PC-9 (cell line): ENCODE measurements at regions of chr3 and their contacts with region 1.

Region 1: DNA sequence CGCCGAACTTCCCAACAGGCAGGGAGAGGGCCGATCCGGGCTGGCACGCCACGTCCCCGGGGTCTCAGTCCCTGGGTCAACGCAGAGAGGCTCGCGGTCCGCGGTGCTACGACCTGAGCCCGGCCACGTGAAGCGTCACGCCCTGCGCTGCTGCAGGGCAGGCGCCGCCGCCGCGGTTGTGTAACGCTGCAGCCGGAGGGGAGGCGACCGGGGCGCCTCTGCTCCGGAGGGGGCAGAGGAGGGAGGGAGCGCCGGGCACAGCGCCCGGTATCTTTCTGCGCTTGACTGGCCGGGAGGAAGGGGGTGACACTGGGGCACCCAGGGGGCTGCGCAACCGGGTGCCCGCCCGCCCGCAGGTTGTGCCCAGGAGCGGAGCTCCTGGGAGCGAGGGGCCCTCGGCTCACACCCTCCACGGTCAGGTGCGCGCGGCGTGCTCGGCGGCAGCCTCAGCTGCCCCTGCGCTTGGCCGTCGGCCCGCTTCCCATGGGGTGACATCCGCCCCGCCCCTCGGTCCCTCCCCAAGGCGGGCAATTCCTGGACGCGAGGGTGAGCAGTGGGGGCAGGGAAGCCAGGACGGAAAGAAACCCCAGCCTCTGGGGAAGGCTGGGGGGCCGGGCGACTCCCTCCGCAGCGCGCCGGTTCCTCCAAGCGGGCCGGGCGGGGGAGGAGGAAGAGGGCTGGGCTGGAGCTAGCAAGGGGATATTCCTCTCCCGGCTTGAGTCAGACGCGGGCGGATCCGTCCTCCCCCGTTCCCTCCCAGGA is 852 bp upstream of the BHLHE40 start:
- DNase-seq: peak; percentile 85 to 99
- H3K4me3 ChIP-seq: peak overlapping the region; percentile 69
- H3K27ac ChIP-seq: peak overlapping the region; percentile 100
- H3K4me1 ChIP-seq: peaks cover 26% of the 10 kb centered on the region
- H3K27me3 ChIP-seq: no peaks in the 10 kb centered on the region
- CTCF ChIP-seq: no peak

Region 2: DNA sequence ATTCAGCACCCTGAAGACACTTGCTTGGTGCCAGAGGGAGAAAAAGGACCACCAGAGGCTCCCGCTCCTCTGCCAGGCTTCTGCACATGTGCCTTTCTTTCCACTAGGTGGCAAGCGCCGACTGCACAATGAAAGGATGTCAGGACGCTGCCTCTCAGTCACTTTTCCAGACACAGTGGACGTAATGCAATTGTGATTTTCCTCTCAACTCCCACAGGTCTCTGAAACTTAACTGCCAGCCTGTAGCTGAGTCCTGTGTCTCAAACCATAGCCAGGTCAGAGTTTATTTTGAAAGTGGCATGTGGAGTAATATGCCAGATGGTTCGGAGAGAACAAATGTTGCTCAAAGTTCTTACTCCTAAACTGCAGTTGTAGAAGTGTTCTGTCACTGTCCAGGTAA is 322.3 kb before region 1 on chr3:
- CTCF ChIA-PET with region 1: no interaction called
- POLR2A ChIA-PET with region 1: no interaction called
- intact Hi-C with region 1: loop called (anchors 2 kb)
- DNase-seq: peak; percentile 36 to 69
- H3K4me3 ChIP-seq: no peak overlapping the region
- H3K27ac ChIP-seq: no peak overlapping the region
- H3K4me1 ChIP-seq: no peaks in the 10 kb centered on the region
- H3K27me3 ChIP-seq: no peaks in the 10 kb centered on the region
- CTCF ChIP-seq: peak; percentile 79

Region 3: DNA sequence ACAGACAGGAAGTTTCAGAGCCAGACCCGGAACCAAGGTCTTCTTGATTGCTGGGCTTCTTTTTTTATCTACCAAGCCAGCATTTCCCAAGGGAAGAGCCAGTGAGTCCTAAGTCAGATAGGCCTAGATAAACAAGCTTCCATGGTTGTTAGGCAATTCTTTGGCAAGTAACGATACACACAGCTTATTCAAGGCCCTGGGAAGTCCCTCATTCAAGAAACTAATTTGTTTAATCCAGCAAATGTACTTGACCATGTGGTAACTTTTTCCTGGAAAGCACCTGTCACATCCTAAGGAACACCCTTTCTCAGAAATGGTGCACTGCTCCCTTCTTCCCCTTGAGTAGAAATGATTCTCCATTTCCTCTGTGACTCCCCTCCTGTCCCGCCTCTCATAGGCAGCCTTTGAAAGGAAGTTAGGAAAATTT is 275.3 kb before region 1 on chr3:
- CTCF ChIA-PET with region 1: no interaction called
- POLR2A ChIA-PET with region 1: no interaction called
- intact Hi-C with region 1: no loop called
- DNase-seq: no peak
- H3K4me3 ChIP-seq: no peak overlapping the region
- H3K27ac ChIP-seq: no peak overlapping the region
- H3K4me1 ChIP-seq: no peaks in the 10 kb centered on the region
- H3K27me3 ChIP-seq: no peaks in the 10 kb centered on the region
- CTCF ChIP-seq: no peak

Region 4: GRCh38 chr3:4736284-4736861 is 242.0 kb before region 1 on chr3:
- CTCF ChIA-PET with region 1: no interaction called
- POLR2A ChIA-PET with region 1: no interaction called
- intact Hi-C with region 1: loop called (anchors 1 kb)
- DNase-seq: peak; percentile 86 to 92
- H3K4me3 ChIP-seq: peak overlapping the region; percentile 18; the same call in 1 of the 2 replicates
- H3K27ac ChIP-seq: peak overlapping the region; percentile 92
- H3K4me1 ChIP-seq: peaks cover 45% of the 10 kb centered on the region
- H3K27me3 ChIP-seq: no peaks in the 10 kb centered on the region
- CTCF ChIP-seq: no peak

Region 5: GRCh38 chr3:4904811-4905695 is 73.3 kb before region 1 on chr3:
- CTCF ChIA-PET with region 1: interaction called, 5 read pairs
- POLR2A ChIA-PET with region 1: no interaction called
- intact Hi-C with region 1: loop called (anchors 2 kb)
- DNase-seq: peak; percentile 34 to 36
- H3K4me3 ChIP-seq: no peak overlapping the region
- H3K27ac ChIP-seq: no peak overlapping the region
- H3K4me1 ChIP-seq: 0 out of 2 replicates have a peak, but pooled peaks cover 10% of the 10 kb centered on the region
- H3K27me3 ChIP-seq: no peaks in the 10 kb centered on the region
- CTCF ChIP-seq: no peak

Region 6: DNA sequence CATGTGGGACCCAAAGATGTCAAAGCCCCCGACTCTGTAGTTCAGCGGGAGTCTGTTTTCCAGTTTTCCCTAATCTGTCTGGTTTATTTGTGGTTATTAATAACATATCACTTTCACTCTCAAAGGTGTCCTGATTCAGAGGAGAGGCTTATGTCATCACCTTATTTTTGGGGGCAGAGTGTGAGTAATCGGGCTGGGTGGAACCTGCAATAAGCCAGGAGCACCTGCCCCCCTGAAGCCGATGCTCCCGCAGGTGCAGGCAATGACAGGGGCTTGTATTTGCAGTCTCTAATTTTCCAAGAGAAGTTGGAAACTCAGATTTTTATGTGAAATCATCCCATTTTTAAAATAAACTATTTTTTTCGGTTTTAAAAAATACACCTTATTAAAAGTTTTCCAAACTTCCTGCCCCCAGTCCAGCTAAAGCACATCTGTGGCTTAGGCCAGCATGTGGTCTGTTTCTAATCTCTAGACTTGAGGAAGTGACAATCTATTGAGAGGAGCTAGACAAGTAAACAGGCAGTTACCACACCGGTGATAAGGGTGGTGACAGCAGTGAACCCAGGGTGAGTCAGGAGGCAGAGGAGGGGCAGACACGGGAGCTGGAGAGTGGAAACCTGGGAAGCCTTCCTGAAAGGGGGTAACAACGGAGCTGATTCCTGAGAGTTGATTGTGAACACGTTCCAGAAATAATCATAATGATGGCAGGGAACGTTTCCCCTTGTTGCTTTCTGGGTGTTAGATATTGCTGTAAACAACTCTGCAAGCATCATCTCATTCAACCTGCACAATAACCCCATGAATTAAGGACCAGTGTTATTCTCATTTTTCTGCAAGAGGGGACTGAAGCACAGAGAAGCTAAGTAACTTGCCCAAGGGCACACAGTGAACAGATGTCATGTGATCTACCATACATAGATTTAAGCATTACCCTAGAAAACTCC is 38.1 kb after region 1 on chr3:
- CTCF ChIA-PET with region 1: interaction called, 3 read pairs
- POLR2A ChIA-PET with region 1: interaction called, 29 read pairs
- intact Hi-C with region 1: no loop called
- DNase-seq: peak; percentile 67 to 87
- H3K4me3 ChIP-seq: no peak overlapping the region
- H3K27ac ChIP-seq: peak overlapping the region; percentile 63
- H3K4me1 ChIP-seq: peaks cover 64% of the 10 kb centered on the region
- H3K27me3 ChIP-seq: no peaks in the 10 kb centered on the region
- CTCF ChIP-seq: no peak

Region 7: DNA sequence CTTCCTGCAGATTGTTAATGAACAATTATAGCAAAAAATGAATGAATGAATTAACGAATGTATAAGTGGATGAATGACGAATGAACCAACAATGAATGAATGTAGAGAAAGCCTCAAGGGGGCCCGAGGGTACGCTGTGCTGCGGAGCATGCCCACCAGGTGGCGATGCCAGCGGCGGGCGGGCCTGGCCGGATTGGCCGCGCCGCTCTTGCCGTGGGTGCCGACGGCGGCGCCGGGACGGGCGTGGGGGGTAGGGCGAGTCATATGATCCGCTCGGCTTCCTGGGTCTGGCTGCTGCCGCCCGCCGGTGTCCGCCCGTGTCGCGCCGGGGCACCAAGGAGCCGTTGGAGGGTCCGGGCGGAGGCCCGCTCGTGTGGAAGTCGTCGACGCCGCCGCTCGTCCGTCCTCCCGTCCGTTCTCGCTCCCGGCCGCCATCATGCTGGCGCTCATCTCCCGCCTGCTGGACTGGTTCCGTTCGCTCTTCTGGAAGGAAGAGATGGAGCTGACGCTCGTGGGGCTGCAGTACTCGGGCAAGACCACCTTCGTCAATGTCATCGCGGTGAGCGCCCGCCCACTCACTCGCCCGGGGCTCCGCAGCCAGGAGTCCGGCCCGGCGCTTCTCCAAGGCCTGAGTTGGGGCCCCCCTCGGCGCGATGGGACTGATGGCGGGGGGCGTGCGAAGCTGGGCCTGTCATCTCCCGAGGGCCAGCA is 143.8 kb after region 1 on chr3 and contains the start of gene ARL8B:
- CTCF ChIA-PET with region 1: no interaction called
- POLR2A ChIA-PET with region 1: interaction called, 3 read pairs
- intact Hi-C with region 1: loop called (anchors 2 kb)
- DNase-seq: peak; percentile 58 to 90
- H3K4me3 ChIP-seq: peak within 1 kb of the TSS; percentile 76
- H3K27ac ChIP-seq: peak within 1 kb of the TSS; percentile 85
- H3K4me1 ChIP-seq: peaks cover 26% of the 10 kb centered on the region
- H3K27me3 ChIP-seq: no peaks in the 10 kb centered on the region
- CTCF ChIP-seq: peak; percentile 72
- total RNA-seq, gene ARL8B: 45.4 and 49.5 TPM in 2 replicates

Region 8: GRCh38 chr3:5194341-5195159 is 216.2 kb after region 1 on chr3:
- CTCF ChIA-PET with region 1: no interaction called
- POLR2A ChIA-PET with region 1: no interaction called
- intact Hi-C with region 1: loop called (anchors 2 kb)
- DNase-seq: peak; percentile 31 to 91
- H3K4me3 ChIP-seq: peak overlapping the region; percentile 19; the same call in 1 of the 2 replicates
- H3K27ac ChIP-seq: peak overlapping the region; percentile 100
- H3K4me1 ChIP-seq: peaks cover 88% of the 10 kb centered on the region
- H3K27me3 ChIP-seq: no peaks in the 10 kb centered on the region
- CTCF ChIP-seq: no peak